ENCODE measurements at regions of chr3 and their contacts with region 1.

Region 1: GRCh38 chr3:134299185-134299887 is 48.7 kb upstream of the RYK start:
- DNase-seq: no peak
- ATAC-seq: peak; percentile 37
- H3K4me3 Mint-ChIP-seq: no peak overlapping the region
- H3K27ac Mint-ChIP-seq: no peak overlapping the region
- H3K4me1 Mint-ChIP-seq: no peaks in the 10 kb centered on the region
- H3K27me3 Mint-ChIP-seq: peaks cover 16% of the 10 kb centered on the region
- CTCF ChIP-seq: no peak

Region 2: GRCh38 chr3:134250717-134251220 is 48.6 kb before region 1 on chr3 and contains the start of gene RYK:
- CTCF ChIA-PET with region 1: interaction called, 4 read pairs
- POLR2A ChIA-PET with region 1: interaction called, 10 read pairs
- intact Hi-C with region 1: loop called (anchors 5 kb)
- DNase-seq: peak; percentile 77
- ATAC-seq: peak; percentile 69
- H3K4me3 Mint-ChIP-seq: peak within 1 kb of the TSS; percentile 87
- H3K27ac Mint-ChIP-seq: peak within 1 kb of the TSS; percentile 93
- H3K4me1 Mint-ChIP-seq: peaks cover 61% of the 10 kb centered on the region
- H3K27me3 Mint-ChIP-seq: peaks cover 6% of the 10 kb centered on the region
- CTCF ChIP-seq: no peak
- total RNA-seq, gene RYK: 19.8 to 21.9 TPM

Measured in activated CD8-positive, alpha-beta T cell treated with anti-CD3 and anti-CD28 coated beads for 36 hours (primary cell).